Heart right ventricle (tissue), 16 donors: ENCODE measurements at regions of chr5 and their contacts with region 1.

Region 1: DNA sequence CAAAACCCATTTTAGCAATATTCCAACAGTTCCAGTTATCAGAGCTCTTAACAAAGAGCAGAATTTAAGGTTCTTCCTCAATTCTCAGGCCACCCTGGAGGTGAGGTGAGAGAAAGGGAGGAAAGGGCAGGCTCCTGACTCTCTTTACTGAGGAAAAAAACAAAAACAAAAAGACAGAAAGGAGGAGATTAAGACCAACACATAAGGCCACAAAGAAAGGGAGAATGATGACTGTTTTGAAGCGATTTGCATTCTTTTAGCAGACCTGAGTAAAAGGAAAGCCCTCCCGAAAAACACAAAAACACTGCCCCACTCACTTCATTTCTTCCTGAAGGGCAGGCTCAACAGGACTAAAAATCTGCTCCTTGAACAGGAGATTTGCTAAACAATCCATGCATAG is 300.5 kb downstream of the ARL15 start:
- DNase-seq: no peak
- ATAC-seq: no peak
- H3K4me3 ChIP-seq: no peak overlapping the region
- H3K27ac ChIP-seq: no peak overlapping the region
- H3K4me1 ChIP-seq: peaks cover 0 to 18% (median 3%) of the 10 kb centered on the region in 9 donors
- H3K27me3 ChIP-seq: no peaks in the 10 kb centered on the region
- CTCF ChIP-seq: no peak

Region 2: GRCh38 chr5:53786468-53786867 is 223.4 kb before region 1 on chr5:
- intact Hi-C with region 1: loop called in 1 of 10 experiments (anchors 2 kb)
- DNase-seq: no peak
- ATAC-seq: no peak
- H3K4me3 ChIP-seq: no peak overlapping the region
- H3K27ac ChIP-seq: no peak overlapping the region
- H3K4me1 ChIP-seq: no peaks in the 10 kb centered on the region
- H3K27me3 ChIP-seq: no peaks in the 10 kb centered on the region
- CTCF ChIP-seq: no peak